PC-9 (cell line): ENCODE measurements at regions of chr19 and their contacts with region 1.

Region 1: GRCh38 chr19:48553676-48554386 is 1.9 kb downstream of the SULT2B1 start:
- DNase-seq: peak; percentile 85 to 89
- H3K4me3 ChIP-seq: peak overlapping the region; percentile 5; the same call in 1 of the 2 replicates
- H3K27ac ChIP-seq: peak overlapping the region; percentile 49
- H3K4me1 ChIP-seq: peaks cover 59% of the 10 kb centered on the region
- H3K27me3 ChIP-seq: no peaks in the 10 kb centered on the region
- CTCF ChIP-seq: no peak

Region 2: DNA sequence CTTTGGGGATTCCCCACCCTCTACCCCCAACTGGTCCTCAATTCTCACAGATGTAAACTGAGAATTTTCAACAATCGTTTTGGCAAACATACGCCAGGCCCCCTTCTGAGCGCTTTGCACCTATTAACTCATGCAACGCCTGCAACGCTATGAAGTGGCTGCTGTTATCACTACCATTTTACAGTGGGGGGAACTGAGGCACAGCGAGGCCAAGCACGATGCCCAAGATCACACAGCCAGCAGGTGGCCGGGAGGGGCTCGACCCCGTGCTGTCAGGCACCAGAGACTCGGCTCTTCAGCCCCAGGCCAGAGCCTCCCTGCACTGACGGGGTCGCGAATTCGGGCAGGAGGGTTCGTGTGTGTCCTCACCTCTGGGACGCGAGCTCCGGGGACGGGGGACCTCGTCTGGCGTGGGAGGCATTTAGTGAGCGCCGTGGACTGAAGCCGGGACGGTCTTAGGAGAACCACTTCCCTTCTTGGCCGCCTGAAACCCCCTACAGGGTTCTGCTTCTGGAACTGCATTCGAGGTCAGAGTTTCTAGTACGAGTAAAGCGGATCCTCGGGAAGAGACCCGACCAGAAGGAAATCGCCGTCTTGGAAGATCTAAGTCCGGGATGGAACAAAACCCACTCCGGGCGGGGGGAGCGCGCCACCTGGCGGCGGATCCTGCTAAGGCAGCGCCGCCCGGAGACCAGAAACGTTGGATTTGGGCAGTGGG is 262.9 kb before region 1 on chr19:
- CTCF ChIA-PET with region 1: no interaction called
- POLR2A ChIA-PET with region 1: no interaction called
- intact Hi-C with region 1: no loop called
- DNase-seq: peak; percentile 65 to 82
- H3K4me3 ChIP-seq: peak overlapping the region; percentile 70
- H3K27ac ChIP-seq: no peak overlapping the region
- H3K4me1 ChIP-seq: peaks cover 13% of the 10 kb centered on the region
- H3K27me3 ChIP-seq: no peaks in the 10 kb centered on the region
- CTCF ChIP-seq: peak; percentile 99

Region 3: GRCh38 chr19:48513289-48514122 is 40.3 kb before region 1 on chr19:
- CTCF ChIA-PET with region 1: no interaction called
- POLR2A ChIA-PET with region 1: no interaction called
- intact Hi-C with region 1: loop called (anchors 2 kb)
- DNase-seq: peak; percentile 62 to 68
- H3K4me3 ChIP-seq: peak overlapping the region; percentile 83
- H3K27ac ChIP-seq: no peak overlapping the region
- H3K4me1 ChIP-seq: no peaks in the 10 kb centered on the region; the same call in 1 of the 2 replicates
- H3K27me3 ChIP-seq: no peaks in the 10 kb centered on the region
- CTCF ChIP-seq: no peak

Region 4: DNA sequence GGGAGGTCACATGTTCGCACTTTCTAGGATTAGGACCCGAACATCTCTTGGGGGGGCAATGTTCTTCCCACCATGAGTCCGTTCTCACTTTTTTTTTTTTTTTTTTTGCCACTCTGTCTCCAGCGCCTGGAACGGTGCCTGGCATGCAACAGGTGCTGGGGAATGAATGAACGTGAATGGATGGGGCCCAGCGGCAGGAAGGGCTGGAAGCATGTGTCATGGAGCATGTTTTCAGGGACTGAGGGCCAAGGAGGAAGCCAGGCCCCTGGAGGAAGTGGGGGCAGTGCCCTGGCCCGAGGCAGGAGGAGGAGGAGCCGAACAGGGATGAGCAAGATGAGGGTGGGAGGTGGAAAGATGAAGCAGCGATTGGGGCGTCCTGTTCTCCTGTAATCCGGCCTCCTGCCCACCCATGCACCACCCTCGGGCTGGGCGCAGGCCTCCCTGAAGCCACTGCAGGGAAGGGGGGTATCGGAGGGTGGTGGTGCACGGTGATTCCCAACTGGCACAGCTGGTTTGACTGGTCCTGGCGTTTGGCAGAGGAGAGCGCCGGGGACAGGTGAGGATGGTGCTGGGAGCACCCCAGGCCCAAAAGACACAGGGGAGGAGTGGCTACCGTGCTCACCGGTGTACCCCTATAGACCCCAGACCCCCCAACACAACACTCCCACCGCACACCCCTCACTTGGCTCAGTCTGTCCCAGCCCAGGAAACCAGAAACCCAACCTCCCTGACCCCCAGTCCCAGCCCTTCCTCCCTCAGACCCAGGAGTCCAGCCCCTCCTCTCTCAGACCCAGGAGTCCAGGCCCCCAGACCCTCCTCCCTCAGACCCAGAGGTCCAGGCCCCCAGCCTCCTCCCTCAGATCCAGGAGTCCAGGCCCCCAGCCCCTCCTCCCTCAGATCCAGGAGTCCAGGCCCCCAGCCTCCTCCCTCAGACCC is 10.4 kb before region 1 on chr19:
- CTCF ChIA-PET with region 1: no interaction called
- POLR2A ChIA-PET with region 1: interaction called, 4 read pairs
- intact Hi-C with region 1: loop called (anchors 1 kb)
- DNase-seq: peak; percentile 96
- H3K4me3 ChIP-seq: peak overlapping the region; percentile 34; the same call in 1 of the 2 replicates
- H3K27ac ChIP-seq: peak overlapping the region; percentile 58
- H3K4me1 ChIP-seq: peaks cover 24% of the 10 kb centered on the region
- H3K27me3 ChIP-seq: no peaks in the 10 kb centered on the region
- CTCF ChIP-seq: no peak

Region 5: DNA sequence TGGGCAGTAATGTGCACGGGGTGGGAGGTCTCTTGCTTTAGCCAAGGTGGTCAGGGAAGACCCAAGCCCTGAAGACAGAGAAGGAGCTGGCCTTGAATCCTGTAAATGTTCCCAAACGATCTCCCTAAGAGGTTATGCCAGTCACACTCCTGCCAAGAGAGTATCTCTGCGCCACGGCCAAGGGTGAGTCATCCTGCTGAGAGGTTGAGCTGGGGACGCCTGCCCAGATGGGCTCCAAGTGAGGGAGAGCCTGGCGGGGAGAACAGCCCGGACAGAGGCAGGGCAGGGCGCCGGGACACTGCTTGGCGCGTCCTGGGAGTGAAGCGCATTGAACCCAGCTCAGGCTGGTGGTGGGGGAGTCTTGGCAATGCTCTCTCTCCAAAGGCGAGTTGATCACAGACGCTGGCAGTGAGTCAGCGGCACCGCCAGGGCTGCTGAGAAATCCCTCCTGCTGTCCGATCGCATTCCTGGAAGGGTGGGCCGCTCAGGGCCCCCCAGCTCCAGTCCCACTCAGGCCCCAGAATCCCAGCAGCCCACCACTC is 14.6 kb after region 1 on chr19:
- CTCF ChIA-PET with region 1: interaction called, 9 read pairs
- POLR2A ChIA-PET with region 1: interaction called, 18 read pairs
- intact Hi-C with region 1: no loop called
- DNase-seq: peak; percentile 83
- H3K4me3 ChIP-seq: peak overlapping the region; percentile 32; the same call in 1 of the 2 replicates
- H3K27ac ChIP-seq: peak overlapping the region; percentile 40
- H3K4me1 ChIP-seq: peaks cover 29% of the 10 kb centered on the region
- H3K27me3 ChIP-seq: no peaks in the 10 kb centered on the region
- CTCF ChIP-seq: no peak

Region 6: GRCh38 chr19:48856921-48857320 is 303.1 kb after region 1 on chr19:
- CTCF ChIA-PET with region 1: no interaction called
- POLR2A ChIA-PET with region 1: no interaction called
- intact Hi-C with region 1: no loop called
- DNase-seq: no peak
- H3K4me3 ChIP-seq: no peak overlapping the region
- H3K27ac ChIP-seq: no peak overlapping the region
- H3K4me1 ChIP-seq: 0 out of 2 replicates have a peak, but pooled peaks cover 4% of the 10 kb centered on the region
- H3K27me3 ChIP-seq: no peaks in the 10 kb centered on the region
- CTCF ChIP-seq: no peak